Activated CD4-positive, alpha-beta memory T cell treated with anti-CD3 and anti-CD28 coated beads, Interleukin-2, amount 10 ng/mL, durations not matched to agents 7 days and 5 days (primary cell): ENCODE measurements at regions of chr11 and their contacts with region 1.

Region 1: GRCh38 chr11:121482231-121483129 is 29.7 kb upstream of the SORL1-AS1 start:
- DNase-seq: peak; percentile 77
- H3K4me3 Mint-ChIP-seq: peak overlapping the region; percentile 77
- H3K27ac Mint-ChIP-seq: peak overlapping the region; percentile 99
- H3K4me1 Mint-ChIP-seq: peaks cover 56% of the 10 kb centered on the region
- H3K27me3 Mint-ChIP-seq: no peaks in the 10 kb centered on the region

Region 2: DNA sequence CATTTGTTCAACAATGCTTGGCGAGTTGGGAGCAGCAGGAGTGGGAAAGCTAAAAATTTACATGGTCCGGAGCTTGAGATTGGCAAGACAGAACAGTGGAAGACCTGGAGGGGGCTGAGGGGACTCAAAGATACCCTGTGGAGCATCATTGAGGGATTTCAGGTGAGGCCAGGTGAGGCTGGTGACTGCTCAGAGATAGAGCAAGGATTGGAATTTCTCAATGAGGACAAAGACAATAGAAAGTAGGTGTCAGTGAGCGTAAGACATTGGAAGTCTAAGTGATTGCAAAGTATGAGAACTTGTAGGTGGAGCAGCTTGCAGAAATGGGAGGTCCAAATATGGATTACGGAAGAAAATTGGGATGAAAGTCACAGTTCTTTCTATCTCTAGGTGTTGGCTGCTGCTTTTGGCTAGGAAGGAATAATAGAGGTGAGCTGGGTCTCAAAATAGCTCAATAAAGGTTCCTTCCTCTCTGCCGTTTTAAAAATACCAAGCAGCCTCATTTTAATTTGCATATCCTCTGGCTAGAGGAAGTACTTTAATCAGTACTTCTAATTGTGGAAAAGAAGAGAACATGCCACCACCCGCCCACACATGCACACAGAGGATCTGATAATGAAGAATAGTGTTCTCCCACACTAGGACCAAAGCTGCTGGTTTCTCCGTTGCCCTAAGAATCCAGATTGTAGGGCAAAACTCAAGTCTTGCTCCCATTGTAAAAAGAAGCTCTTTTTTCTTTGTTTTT is 12.0 kb after region 1 on chr11:
- CTCF ChIA-PET with region 1: interaction called, 5 read pairs
- POLR2A ChIA-PET with region 1: interaction called, 19 read pairs
- DNase-seq: peak; percentile 25
- H3K4me3 Mint-ChIP-seq: peak overlapping the region; percentile 5
- H3K27ac Mint-ChIP-seq: peak overlapping the region; percentile 55
- H3K4me1 Mint-ChIP-seq: peaks cover 28% of the 10 kb centered on the region
- H3K27me3 Mint-ChIP-seq: no peaks in the 10 kb centered on the region